ENCODE measurements at regions of chr13 and their contacts with region 1.

Region 1: DNA sequence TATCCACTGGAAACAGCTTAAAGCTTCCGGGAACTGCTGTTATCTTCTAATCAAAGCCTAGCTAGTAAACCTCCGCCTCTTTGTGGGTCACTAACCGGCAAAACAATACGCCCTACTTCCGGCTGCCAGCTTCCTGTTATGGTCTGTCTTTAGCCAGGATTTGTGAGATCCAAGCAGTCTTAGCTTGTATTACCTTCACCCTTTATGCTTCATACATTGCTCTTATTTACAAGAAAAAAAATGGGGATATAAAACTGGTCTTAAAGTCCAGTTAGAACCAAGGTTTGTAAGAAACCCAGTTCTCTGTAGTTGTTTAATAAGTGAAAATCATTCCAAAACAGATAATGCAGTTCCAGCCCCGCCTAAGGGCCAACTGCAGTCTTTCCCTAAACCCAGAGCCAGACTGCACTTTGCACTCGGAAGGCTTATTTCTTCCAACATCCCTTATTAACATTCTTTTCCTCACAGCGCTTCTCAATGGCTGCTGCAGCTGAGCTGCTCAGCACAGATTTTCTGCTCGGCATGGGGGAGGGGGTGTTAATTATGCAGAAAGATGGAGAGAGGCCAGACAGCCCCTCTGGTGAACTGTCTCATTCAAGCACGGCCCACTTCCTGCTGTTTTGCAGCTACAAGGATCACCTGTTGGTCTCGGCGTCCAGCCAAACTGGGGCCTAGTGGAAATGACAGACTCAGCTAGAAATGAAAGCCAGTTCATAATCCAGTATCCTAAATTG is 368.4 kb downstream of the KLF12 start:
- DNase-seq: peak; percentile 56 to 91
- ATAC-seq: peak; percentile 86 to 90 (median 88)
- H3K4me3 ChIP-seq: no peak overlapping the region
- H3K4me3 Mint-ChIP-seq: peak overlapping the region; percentile 88
- H3K27ac ChIP-seq: peak overlapping the region; percentile 65
- H3K27ac Mint-ChIP-seq: peak overlapping the region; percentile 93 to 96
- H3K4me1 ChIP-seq: peaks cover 21% of the 10 kb centered on the region
- H3K4me1 Mint-ChIP-seq: peaks cover 59 to 70% of the 10 kb centered on the region in 2 donors
- H3K27me3 ChIP-seq: no peaks in the 10 kb centered on the region
- H3K27me3 Mint-ChIP-seq: no peaks in the 10 kb centered on the region
- CTCF ChIP-seq: no peak

Region 2: GRCh38 chr13:73715114-73715910 is 50.5 kb before region 1 on chr13:
- intact Hi-C with region 1: loop called (anchors 5 kb)
- DNase-seq: peak; percentile 39 to 92
- ATAC-seq: peak; percentile 81 to 91 (median 89)
- H3K4me3 ChIP-seq: no peak overlapping the region
- H3K4me3 Mint-ChIP-seq: peak overlapping the region; percentile 89
- H3K27ac ChIP-seq: peak overlapping the region; percentile 86
- H3K27ac Mint-ChIP-seq: peak overlapping the region; percentile 94 to 97
- H3K4me1 ChIP-seq: peaks cover 24% of the 10 kb centered on the region
- H3K4me1 Mint-ChIP-seq: peaks cover 53 to 55% of the 10 kb centered on the region in 2 donors
- H3K27me3 ChIP-seq: no peaks in the 10 kb centered on the region
- H3K27me3 Mint-ChIP-seq: no peaks in the 10 kb centered on the region
- CTCF ChIP-seq: no peak

Region 3: GRCh38 chr13:73754727-73755292 is 11.0 kb before region 1 on chr13:
- intact Hi-C with region 1: loop called (anchors 1 kb)
- DNase-seq: peak in 1 of 2 donors; percentile 80
- ATAC-seq: peak; percentile 41 to 70 (median 62)
- H3K4me3 ChIP-seq: no peak overlapping the region
- H3K4me3 Mint-ChIP-seq: no peak overlapping the region
- H3K27ac ChIP-seq: no peak overlapping the region
- H3K27ac Mint-ChIP-seq: peak overlapping the region; percentile 8 to 44
- H3K4me1 ChIP-seq: peaks cover 5% of the 10 kb centered on the region
- H3K4me1 Mint-ChIP-seq: peaks cover 31 to 35% of the 10 kb centered on the region in 2 donors
- H3K27me3 ChIP-seq: no peaks in the 10 kb centered on the region
- H3K27me3 Mint-ChIP-seq: no peaks in the 10 kb centered on the region
- CTCF ChIP-seq: peak; percentile 80

Measured in natural killer cell (primary cell).